Heart right ventricle (tissue), 16 donors: ENCODE measurements at regions of chr2 and their contacts with region 1.

Region 1: DNA sequence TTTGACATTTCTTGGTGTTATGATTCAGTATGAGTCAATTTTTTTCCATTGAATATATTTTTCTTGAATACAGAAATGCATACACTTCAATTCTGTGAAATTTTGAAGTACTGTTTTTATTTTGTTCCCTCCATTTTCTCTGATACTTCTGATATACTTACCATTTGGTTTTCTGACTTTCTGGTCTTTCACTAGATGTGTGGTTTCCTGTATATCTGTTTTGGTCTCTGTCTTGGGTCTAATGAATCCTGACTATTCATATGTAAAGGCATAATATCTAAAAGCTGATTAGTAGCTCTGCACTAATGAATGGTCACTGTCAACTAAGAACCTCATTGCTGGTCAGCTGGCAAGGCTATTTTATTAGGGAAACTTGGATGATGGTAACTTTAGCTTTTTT is 345.6 kb downstream of the GRB14 start:
- DNase-seq: no peak
- ATAC-seq: no peak
- H3K4me3 ChIP-seq: no peak overlapping the region
- H3K27ac ChIP-seq: no peak overlapping the region
- H3K4me1 ChIP-seq: no peaks in the 10 kb centered on the region
- H3K27me3 ChIP-seq: no peaks in the 10 kb centered on the region
- CTCF ChIP-seq: no peak

Region 2: GRCh38 chr2:164706522-164706921 is 430.9 kb after region 1 on chr2:
- intact Hi-C with region 1: loop called in 1 of 10 experiments (anchors 5 kb)
- DNase-seq: no peak
- ATAC-seq: no peak
- H3K4me3 ChIP-seq: no peak overlapping the region
- H3K27ac ChIP-seq: no peak overlapping the region
- H3K4me1 ChIP-seq: no peaks in the 10 kb centered on the region
- H3K27me3 ChIP-seq: no peaks in the 10 kb centered on the region
- CTCF ChIP-seq: no peak